Activated CD4-positive, alpha-beta T cell treated with anti-CD3 and anti-CD28 coated beads, Interleukin-2, amount 10 ng/mL, durations not matched to agents 24 days and 14 days (primary cell): ENCODE measurements at regions of chr6 and their contacts with region 1.

Region 1: DNA sequence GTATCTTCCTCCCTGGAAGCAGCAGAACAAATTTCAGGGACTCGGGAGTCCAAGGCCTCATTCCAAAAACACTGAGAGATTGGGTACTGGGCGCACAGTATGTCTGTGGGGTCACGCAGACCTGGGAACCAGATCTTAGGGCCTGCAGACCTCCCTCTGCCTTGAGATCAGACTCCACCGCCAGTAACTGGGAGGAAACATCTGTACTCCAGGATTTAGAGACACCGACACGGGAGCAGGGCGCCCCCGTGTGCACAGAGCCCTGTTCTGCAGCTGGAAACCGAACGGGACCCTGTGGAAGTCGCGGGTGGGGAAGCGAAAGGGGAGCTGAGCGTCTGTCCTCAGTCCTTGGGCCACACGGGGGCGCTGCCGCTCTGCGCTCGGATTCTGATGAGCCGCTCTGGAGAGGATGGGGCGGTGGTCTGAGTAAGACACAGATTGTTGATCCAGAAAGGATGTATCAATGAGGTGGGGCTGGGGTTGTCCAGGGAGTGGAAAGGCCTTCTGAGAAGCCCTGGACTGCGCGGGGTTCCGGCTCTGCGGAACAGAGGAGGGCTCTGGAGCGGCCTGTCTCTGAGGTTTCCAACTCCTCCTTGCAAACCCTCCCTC is 35.7 kb upstream of the HLA-E start:
- DNase-seq: peak; percentile 97
- H3K4me3 Mint-ChIP-seq: peak overlapping the region; percentile 45
- H3K27ac Mint-ChIP-seq: no peak overlapping the region
- H3K4me1 Mint-ChIP-seq: peaks cover 26% of the 10 kb centered on the region
- H3K27me3 Mint-ChIP-seq: peaks cover 82% of the 10 kb centered on the region

Region 2: GRCh38 chr6:30357678-30358540 is 95.7 kb before region 1 on chr6:
- intact Hi-C with region 1: loop called (anchors 5 kb)
- DNase-seq: peak; percentile 84
- H3K4me3 Mint-ChIP-seq: peak overlapping the region; percentile 87
- H3K27ac Mint-ChIP-seq: no peak overlapping the region
- H3K4me1 Mint-ChIP-seq: peaks cover 7% of the 10 kb centered on the region
- H3K27me3 Mint-ChIP-seq: peaks cover 75% of the 10 kb centered on the region

Region 3: DNA sequence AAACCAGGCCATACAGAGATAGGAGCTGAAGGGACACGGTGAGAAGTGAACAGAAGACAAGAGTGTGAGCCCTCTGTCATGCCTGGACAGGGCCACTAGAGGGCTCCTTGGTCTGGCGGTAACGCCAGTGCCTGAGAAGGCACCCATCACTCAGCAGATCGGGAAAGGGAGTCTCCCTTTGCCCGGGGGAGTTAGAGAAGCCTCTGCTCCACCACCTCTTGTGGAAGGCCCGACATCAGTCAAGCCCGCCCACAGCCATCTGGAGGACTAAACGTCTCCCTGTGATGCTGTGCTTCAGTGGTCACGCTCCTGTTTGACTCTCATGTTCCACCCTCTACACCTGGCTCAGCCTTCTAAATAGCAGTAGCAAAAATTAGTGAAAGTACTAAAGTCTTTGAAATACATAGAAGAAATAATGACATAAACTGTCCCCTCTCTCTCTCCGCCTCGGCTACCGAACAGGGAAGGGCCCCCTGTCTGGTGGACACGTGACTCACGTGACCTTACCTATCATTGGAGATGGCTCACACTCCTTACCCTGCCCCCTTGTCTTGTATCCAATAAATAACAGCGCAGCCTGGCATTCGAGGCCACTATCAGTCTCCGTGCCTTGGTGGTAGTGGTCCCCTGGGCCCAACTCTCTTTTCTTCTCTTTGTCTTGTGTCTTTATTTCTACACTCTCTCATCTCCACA is 42.0 kb before region 1 on chr6:
- intact Hi-C with region 1: loop called (anchors 5 kb)
- DNase-seq: peak; percentile 90
- H3K4me3 Mint-ChIP-seq: no peak overlapping the region
- H3K27ac Mint-ChIP-seq: no peak overlapping the region
- H3K4me1 Mint-ChIP-seq: peaks cover 6% of the 10 kb centered on the region
- H3K27me3 Mint-ChIP-seq: peaks cover 77% of the 10 kb centered on the region

Region 4: DNA sequence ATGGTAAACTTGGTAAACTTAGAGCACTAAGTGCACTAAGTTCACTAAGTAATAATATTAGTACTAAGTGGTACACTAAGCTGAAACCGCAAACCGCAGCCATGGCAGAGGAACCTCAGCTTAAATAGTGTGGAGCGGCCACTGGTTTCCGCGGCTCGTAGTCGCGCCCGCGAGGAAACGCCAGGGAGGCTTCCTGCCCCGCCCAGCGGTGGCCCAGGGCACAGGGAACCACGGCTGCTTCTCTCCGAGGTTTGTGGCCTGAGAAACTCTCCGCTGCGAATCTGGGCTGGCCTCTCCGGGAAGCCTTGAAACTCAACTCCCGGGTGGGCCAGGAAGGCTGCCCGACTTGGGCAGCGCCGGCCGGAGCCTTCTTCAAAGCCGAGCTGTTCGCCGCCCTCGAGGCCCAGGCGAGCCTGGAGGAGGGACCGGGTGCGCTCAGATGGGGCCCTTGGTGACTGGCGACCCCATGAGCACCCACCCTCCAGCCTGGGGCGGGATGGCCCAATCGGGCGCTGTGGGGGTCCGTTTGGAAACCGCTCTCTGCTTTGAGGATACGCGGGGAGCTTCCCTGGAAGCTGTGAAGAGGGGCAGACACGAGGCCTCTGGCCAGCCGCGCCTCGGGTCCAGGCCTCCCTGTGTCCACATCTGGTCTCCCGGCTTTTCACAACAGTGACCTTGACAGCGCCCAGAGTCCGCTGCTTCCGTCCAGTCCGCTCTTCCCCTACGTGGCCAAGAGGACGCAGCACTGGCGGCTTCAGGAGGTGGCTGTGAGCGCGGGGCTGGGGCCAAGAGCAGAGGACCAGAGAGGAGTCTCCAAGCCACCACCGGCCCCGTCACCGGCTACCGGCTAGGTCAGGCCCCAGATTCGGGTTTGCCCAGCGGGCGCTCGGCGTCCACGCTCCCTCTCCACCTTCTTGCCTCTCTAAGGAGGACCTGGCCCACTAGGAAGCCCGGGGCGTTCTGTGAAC is 10.3 kb after region 1 on chr6:
- intact Hi-C with region 1: loop called (anchors 1 kb)
- DNase-seq: peak; percentile 88
- H3K4me3 Mint-ChIP-seq: no peak overlapping the region
- H3K27ac Mint-ChIP-seq: no peak overlapping the region
- H3K4me1 Mint-ChIP-seq: peaks cover 21% of the 10 kb centered on the region
- H3K27me3 Mint-ChIP-seq: peaks cover 87% of the 10 kb centered on the region

Region 5: DNA sequence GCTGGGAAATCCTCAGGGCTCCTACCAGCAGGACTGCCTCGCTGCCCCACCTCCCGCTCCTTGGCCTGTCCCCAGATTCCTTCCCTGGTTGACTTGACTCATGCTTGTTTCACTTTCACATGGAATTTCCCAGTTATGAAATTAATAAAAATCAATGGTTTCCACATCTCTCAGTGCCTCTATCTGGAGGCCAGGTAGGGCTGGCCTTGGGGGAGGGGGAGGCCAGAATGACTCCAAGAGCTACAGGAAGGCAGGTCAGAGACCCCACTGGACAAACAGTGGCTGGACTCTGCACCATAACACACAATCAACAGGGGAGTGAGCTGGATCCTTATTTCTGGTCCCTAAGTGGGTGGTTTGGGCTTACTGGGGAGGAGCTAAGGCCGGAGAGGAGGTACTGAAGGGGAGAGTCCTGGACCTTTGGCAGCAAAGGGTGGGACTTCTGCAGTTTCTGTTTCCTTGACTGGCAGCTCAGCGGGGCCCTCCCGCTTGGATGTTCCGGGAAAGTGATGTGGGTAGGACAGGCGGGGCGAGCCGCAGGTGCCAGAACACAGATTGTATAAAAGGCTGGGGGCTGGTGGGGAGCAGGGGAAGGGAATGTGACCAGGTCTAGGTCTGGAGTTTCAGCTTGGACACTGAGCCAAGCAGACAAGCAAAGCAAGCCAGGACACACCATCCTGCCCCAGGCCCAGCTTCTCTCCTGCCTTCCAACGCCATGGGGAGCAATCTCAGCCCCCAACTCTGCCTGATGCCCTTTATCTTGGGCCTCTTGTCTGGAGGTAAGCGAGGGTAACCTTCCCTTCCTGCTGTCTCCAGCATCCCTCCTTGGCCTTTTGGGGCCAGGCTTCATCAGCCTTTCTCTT is 1492.1 kb after region 1 on chr6 and contains the start of gene CFB:
- intact Hi-C with region 1: no loop called
- DNase-seq: no peak
- H3K4me3 Mint-ChIP-seq: no peak within 1 kb of the TSS
- H3K27ac Mint-ChIP-seq: no peak within 1 kb of the TSS
- H3K4me1 Mint-ChIP-seq: peaks cover 10% of the 10 kb centered on the region
- H3K27me3 Mint-ChIP-seq: peaks cover 3% of the 10 kb centered on the region
- total RNA-seq, gene CFB: 0.17 TPM in 1 of 2 replicates, not detected in the other